GM12878 (cell line): ENCODE measurements at regions of chr9 and their contacts with region 1.

Region 1: DNA sequence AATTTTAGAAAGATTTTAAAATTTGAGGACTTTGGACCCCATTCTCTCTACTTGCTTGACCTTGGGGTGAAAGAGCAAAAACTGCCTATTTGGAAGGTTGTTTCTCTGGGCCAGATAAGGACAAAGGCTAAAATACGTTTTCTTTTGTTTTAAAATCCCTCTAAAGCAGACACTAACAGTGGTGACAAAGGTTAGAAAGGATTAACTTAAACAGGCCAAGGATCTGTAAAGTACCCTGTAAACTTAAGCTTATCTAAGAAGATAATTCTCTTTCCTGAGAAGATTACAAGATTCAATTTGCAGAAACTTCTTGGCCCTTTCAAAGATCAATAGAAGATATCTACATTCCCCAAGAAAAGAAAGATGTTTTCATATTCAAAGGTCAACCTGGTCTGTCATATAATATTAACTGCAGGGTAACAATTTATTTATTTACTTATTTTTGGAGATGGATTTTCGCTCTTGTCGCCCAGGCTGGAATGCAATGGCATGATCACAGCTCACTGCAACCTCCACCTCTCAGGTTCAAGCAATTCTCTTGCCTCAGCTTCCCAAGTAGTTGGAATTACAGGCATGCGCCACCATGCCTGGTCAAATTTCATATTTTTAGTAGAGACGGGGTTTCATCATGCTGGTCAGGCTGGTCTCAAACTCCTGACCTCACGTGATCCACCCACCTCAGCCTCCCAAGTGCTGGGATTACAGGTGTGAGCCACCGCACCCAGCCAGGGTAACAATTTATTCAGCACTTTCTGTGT is 11.9 kb downstream of the TRPM6 start:
- DNase-seq: no peak
- ATAC-seq: no peak
- H3K4me3 ChIP-seq: no peak overlapping the region
- H3K27ac ChIP-seq: no peak overlapping the region
- H3K4me1 ChIP-seq: no peaks in the 10 kb centered on the region
- H3K27me3 ChIP-seq: no peaks in the 10 kb centered on the region
- CTCF ChIP-seq: no peak
- EP300 ChIP-seq: no peak
- POLR2A ChIP-seq: no peak
- RAD21 ChIP-seq: no peak

Region 2: DNA sequence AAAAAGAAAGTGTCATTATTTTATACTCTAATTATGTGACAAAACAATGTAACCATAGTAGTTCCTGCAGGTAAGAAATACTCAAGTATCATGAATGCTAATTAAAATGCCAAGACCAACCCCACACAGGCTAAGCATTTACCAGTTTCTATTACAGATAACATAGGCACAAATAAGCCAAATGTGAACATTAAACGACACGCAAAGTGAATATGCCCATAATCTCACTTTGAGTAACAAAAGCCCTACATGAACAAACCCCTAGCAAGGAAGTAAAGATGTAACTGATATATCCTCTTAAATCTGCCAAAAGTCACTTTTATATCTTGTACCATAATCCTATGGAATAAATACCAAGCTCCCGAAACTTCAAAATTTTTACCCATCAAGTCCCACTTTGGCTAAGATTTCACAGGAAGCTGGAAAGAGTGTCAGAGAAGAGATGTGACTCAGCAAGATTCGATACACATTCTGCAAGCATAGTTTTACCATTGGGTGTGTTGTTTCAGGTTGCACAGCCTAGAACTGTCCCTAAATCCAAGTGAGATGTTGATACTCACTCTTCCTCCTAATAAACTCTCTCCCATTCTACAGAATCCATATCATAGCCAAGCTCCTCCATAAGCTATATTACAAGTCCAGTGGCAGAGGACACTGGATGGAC is 17.0 kb before region 1 on chr9:
- CTCF ChIA-PET with region 1: no interaction called
- POLR2A ChIA-PET with region 1: no interaction called
- RAD21 ChIA-PET with region 1: no interaction called
- SMC1A ChIA-PET with region 1: no interaction called
- in situ Hi-C with region 1: no loop called
- intact Hi-C with region 1: loop called (anchors 1 kb)
- DNase-seq: no peak
- ATAC-seq: peak; percentile 39
- H3K4me3 ChIP-seq: no peak overlapping the region
- H3K27ac ChIP-seq: no peak overlapping the region
- H3K4me1 ChIP-seq: no peaks in the 10 kb centered on the region
- H3K27me3 ChIP-seq: no peaks in the 10 kb centered on the region
- CTCF ChIP-seq: no peak
- EP300 ChIP-seq: no peak
- POLR2A ChIP-seq: no peak
- RAD21 ChIP-seq: no peak